ENCODE measurements at regions of chr12 and their contacts with region 1.

Region 1: GRCh38 chr12:7092229-7092985 is at the start of gene C1R:
- DNase-seq: peak; percentile 63
- H3K4me3 ChIP-seq: peak within 1 kb of the TSS; percentile 76
- H3K27me3 ChIP-seq: no peaks in the 10 kb centered on the region
- CTCF ChIP-seq: peak; percentile 87
- polyA plus RNA-seq, gene C1R: 668 and 703 TPM in 2 replicates

Region 2: GRCh38 chr12:7079826-7080125 is 12.6 kb before region 1 on chr12:
- CTCF ChIA-PET with region 1: interaction called, 17 read pairs
- POLR2A ChIA-PET with region 1: no interaction called
- DNase-seq: peak; percentile 21
- H3K4me3 ChIP-seq: no peak overlapping the region
- H3K27me3 ChIP-seq: no peaks in the 10 kb centered on the region
- CTCF ChIP-seq: no peak

Region 3: DNA sequence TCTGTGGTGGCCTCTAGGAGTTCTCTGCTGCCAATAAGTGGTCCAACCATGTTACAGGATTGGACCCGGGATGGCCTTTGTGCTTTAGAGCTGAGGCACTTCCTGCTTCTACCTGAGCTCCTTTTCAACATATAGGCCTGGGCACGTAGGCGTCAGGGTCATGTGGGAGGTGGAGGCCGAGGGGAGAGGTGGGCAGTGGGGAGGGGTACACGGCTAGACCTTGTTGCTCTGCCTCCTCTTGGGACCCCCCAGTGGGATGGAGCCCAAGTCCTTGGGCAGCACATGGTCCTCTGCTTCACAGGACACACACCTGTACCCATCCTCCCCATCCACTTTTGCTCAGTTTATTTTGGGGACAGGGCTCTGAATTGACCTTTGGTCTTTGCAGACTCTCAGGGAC is 28.9 kb after region 1 on chr12:
- CTCF ChIA-PET with region 1: no interaction called
- POLR2A ChIA-PET with region 1: no interaction called
- DNase-seq: no peak
- H3K4me3 ChIP-seq: no peak overlapping the region
- H3K27me3 ChIP-seq: no peaks in the 10 kb centered on the region
- CTCF ChIP-seq: no peak

Region 4: GRCh38 chr12:7210642-7211151 is 118.3 kb after region 1 on chr12:
- CTCF ChIA-PET with region 1: no interaction called
- POLR2A ChIA-PET with region 1: no interaction called
- DNase-seq: no peak
- H3K4me3 ChIP-seq: no peak overlapping the region
- H3K27me3 ChIP-seq: no peaks in the 10 kb centered on the region
- CTCF ChIP-seq: no peak

Region 5: DNA sequence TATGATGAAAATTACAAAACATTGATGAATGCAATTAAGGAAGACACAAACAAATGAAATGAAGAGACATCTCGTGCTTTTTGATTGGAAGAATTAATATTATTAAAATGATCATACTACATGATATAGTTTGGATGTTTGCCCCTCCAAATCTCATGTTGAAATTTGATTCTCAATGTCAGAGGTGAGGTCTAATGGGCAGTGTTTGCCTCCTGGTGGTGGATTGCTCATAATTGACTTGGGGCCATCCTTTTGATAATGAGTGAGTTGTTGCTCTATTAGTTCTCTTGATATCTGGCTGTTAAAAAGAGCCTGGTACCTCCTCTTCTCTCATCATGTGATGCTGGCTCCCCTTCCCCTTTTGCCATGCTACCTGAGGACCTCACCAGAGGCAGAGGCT is 294.9 kb after region 1 on chr12:
- CTCF ChIA-PET with region 1: no interaction called
- POLR2A ChIA-PET with region 1: no interaction called
- DNase-seq: no peak
- H3K4me3 ChIP-seq: no peak overlapping the region
- H3K27me3 ChIP-seq: no peaks in the 10 kb centered on the region
- CTCF ChIP-seq: no peak